ENCODE measurements at regions of chrX and their contacts with region 1.

Region 1: GRCh38 chrX:41116948-41117347 is 31.7 kb downstream of the USP9X start:
- DNase-seq: peak; percentile 28
- H3K4me3 ChIP-seq: peak overlapping the region in 2 of 3 experiments; percentile 13 to 29
- H3K27ac ChIP-seq: peak overlapping the region; percentile 29
- H3K4me1 ChIP-seq: peaks cover 5% of the 10 kb centered on the region
- H3K27me3 ChIP-seq: no peaks in the 10 kb centered on the region
- CTCF ChIP-seq: no peak

Region 2: GRCh38 chrX:40647307-40648197 is 469.4 kb before region 1 on chrX and contains the start of gene CXorf38:
- CTCF ChIA-PET with region 1: interaction called, 8 read pairs
- dilution Hi-C with region 1: no loop called
- in situ Hi-C with region 1: loop called (anchors 10 to 25 kb)
- intact Hi-C with region 1: loop called (anchors 1 kb)
- DNase-seq: peak; percentile 88
- H3K4me3 ChIP-seq: peak within 1 kb of the TSS; percentile 52 to 89 (median 77)
- H3K27ac ChIP-seq: peak within 1 kb of the TSS; percentile 62
- H3K4me1 ChIP-seq: peaks cover 17% of the 10 kb centered on the region
- H3K27me3 ChIP-seq: no peaks in the 10 kb centered on the region
- CTCF ChIP-seq: no peak
- total RNA-seq, gene CXorf38: 18.0 to 19.8 TPM

Region 3: GRCh38 chrX:40792433-40792832 is 324.5 kb before region 1 on chrX:
- CTCF ChIA-PET with region 1: no interaction called
- dilution Hi-C with region 1: no loop called
- in situ Hi-C with region 1: loop called in 1 of 2 experiments (anchors 25 kb)
- intact Hi-C with region 1: loop called (anchors 1 kb)
- DNase-seq: no peak
- H3K4me3 ChIP-seq: no peak overlapping the region
- H3K27ac ChIP-seq: no peak overlapping the region
- H3K4me1 ChIP-seq: peaks cover 5% of the 10 kb centered on the region
- H3K27me3 ChIP-seq: no peaks in the 10 kb centered on the region
- CTCF ChIP-seq: no peak

Region 4: DNA sequence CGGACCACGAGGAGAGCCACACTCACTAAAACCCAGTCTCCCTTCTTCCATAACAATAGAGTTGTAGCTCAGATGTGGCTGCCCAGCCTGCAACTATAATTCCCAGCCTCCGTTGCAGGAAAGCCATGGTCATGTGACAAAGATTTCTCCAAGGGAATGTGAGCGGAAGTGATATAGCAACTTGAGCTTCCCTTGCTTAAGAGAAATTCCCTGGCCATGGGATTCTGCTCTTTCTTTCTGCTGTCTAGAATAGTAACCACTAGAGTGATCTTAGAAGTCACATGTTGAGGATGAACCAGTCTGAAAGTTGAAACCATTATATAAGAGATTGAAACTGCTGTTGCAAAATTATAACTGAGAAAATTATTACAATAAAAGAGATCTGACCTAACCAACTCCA is 295.2 kb before region 1 on chrX:
- CTCF ChIA-PET with region 1: no interaction called
- dilution Hi-C with region 1: no loop called
- in situ Hi-C with region 1: no loop called
- intact Hi-C with region 1: no loop called
- DNase-seq: no peak
- H3K4me3 ChIP-seq: no peak overlapping the region
- H3K27ac ChIP-seq: no peak overlapping the region
- H3K4me1 ChIP-seq: no peaks in the 10 kb centered on the region
- H3K27me3 ChIP-seq: peaks cover 4% of the 10 kb centered on the region
- CTCF ChIP-seq: no peak

Region 5: DNA sequence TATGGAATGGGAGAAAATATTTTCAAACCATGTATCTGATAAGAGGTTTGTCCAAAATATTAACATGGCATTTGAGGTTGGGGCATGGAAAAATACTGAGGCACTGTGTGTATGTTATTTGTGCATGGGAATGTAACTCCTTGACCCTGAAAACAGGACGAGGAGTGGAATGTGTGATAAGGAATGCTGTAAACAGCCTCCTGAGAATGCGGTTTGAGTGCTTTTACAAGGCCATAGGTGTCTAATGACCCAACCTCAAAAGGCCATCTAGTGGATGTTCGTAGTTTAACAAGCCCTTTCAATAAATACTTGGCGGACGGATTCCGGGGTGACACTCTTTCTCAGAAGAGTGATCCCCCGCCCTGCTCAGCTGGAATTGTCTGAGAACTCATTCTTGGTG is 194.6 kb before region 1 on chrX:
- CTCF ChIA-PET with region 1: interaction called, 10 read pairs
- dilution Hi-C with region 1: no loop called
- in situ Hi-C with region 1: no loop called
- intact Hi-C with region 1: loop called (anchors 1 kb)
- DNase-seq: peak; percentile 55
- H3K4me3 ChIP-seq: no peak overlapping the region
- H3K27ac ChIP-seq: no peak overlapping the region
- H3K4me1 ChIP-seq: no peaks in the 10 kb centered on the region
- H3K27me3 ChIP-seq: no peaks in the 10 kb centered on the region
- CTCF ChIP-seq: peak; percentile 39 to 56

Measured in mammary epithelial cell (primary cell).